ENCODE measurements at regions of chr15 and their contacts with region 1.

Region 1: DNA sequence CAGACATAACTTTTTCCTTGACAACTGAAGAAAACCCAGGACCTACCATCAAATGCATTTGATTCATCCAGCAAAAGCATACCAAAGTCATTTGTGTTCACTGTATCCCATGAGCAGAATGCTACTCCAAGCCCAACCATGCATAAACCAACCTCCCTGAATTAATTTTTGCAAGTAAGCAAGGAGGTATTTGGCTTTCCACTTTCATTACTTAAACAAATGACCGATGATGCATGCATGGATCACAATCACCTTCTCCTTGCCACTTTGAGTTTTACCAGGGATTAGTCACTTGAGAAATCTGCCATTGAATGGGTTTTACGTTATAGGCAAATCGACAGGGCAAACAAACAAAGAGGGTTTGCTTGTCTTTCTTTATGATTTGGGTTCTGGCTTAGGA is 214.8 kb downstream of the FMN1 start:
- DNase-seq: no peak
- ATAC-seq: no peak
- H3K4me3 ChIP-seq: no peak overlapping the region
- H3K27ac ChIP-seq: no peak overlapping the region
- H3K4me1 ChIP-seq: no peaks in the 10 kb centered on the region
- H3K27me3 ChIP-seq: peaks cover 0 to 4% (median 0%) of the 10 kb centered on the region in 3 donors
- CTCF ChIP-seq: no peak

Region 2: GRCh38 chr15:32861761-32862160 is 117.9 kb before region 1 on chr15:
- intact Hi-C with region 1: loop called in 1 of 2 experiments (anchors 10 kb)
- DNase-seq: peak; percentile 22 to 58
- ATAC-seq: peak in 3 of 4 donors; percentile 33 to 62 (median 36)
- H3K4me3 ChIP-seq: peak overlapping the region; percentile 20
- H3K27ac ChIP-seq: no peak overlapping the region
- H3K4me1 ChIP-seq: no peaks in the 10 kb centered on the region
- H3K27me3 ChIP-seq: no peaks in the 10 kb centered on the region
- CTCF ChIP-seq: no peak

Region 3: GRCh38 chr15:32919749-32920414 is 59.8 kb before region 1 on chr15:
- intact Hi-C with region 1: loop called in 1 of 2 experiments (anchors 10 kb)
- DNase-seq: no peak
- ATAC-seq: no peak
- H3K4me3 ChIP-seq: no peak overlapping the region
- H3K27ac ChIP-seq: no peak overlapping the region
- H3K4me1 ChIP-seq: no peaks in the 10 kb centered on the region
- H3K27me3 ChIP-seq: peaks cover 0 to 2% (median 0%) of the 10 kb centered on the region in 3 donors
- CTCF ChIP-seq: no peak

Region 4: DNA sequence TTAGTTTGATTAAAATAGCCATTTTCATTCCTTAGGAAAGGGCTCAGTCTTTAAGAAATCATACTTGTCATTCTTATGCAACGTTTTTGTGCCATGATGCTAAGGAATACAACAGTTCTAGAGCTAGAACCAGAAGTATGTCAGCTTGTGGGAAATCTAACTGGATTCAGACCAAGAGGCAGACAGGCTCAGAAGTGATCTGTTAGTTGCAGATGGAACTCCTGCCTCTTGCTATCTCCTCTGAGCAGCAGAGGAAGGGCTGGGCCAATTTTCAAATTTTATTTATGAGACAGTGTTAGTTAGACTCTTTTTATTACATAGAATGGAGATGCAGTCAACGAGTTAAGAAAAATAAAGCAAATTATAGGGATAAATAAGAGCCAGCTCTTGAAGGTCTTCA is 282.6 kb after region 1 on chr15:
- intact Hi-C with region 1: no loop called
- DNase-seq: no peak
- ATAC-seq: no peak
- H3K4me3 ChIP-seq: no peak overlapping the region
- H3K27ac ChIP-seq: no peak overlapping the region
- H3K4me1 ChIP-seq: no peaks in the 10 kb centered on the region
- H3K27me3 ChIP-seq: no peaks in the 10 kb centered on the region
- CTCF ChIP-seq: no peak